ENCODE measurements at regions of chr11 and their contacts with region 1.

Region 1: GRCh38 chr11:12235947-12236743 is 125.8 kb downstream of the MICAL2 start:
- DNase-seq: peak; percentile 65 to 74 (median 67)
- H3K4me3 ChIP-seq: peak overlapping the region in 1 of 2 donors; percentile 0
- H3K4me3 Mint-ChIP-seq: peak overlapping the region; percentile 6 to 86 (median 76)
- H3K27ac ChIP-seq: peak overlapping the region; percentile 46
- H3K27ac Mint-ChIP-seq: peak overlapping the region; percentile 76 to 96 (median 93)
- H3K4me1 ChIP-seq: peaks cover 24% of the 10 kb centered on the region
- H3K4me1 Mint-ChIP-seq: peaks cover 15 to 26% (median 20%) of the 10 kb centered on the region in 4 donors
- H3K27me3 ChIP-seq: no peaks in the 10 kb centered on the region
- H3K27me3 Mint-ChIP-seq: no peaks in the 10 kb centered on the region

Region 2: GRCh38 chr11:11987503-11988022 is 248.6 kb before region 1 on chr11:
- CTCF ChIA-PET with region 1: no interaction called
- POLR2A ChIA-PET with region 1: no interaction called
- intact Hi-C with region 1: no loop called
- DNase-seq: no peak
- H3K4me3 ChIP-seq: no peak overlapping the region
- H3K4me3 Mint-ChIP-seq: no peak overlapping the region
- H3K27ac ChIP-seq: no peak overlapping the region
- H3K27ac Mint-ChIP-seq: peak overlapping the region in 2 of 7 donors; percentile 37 to 59
- H3K4me1 ChIP-seq: no peaks in the 10 kb centered on the region
- H3K4me1 Mint-ChIP-seq: peaks cover 0 to 6% (median 4%) of the 10 kb centered on the region in 4 donors
- H3K27me3 ChIP-seq: no peaks in the 10 kb centered on the region
- H3K27me3 Mint-ChIP-seq: peaks cover 2 to 4% of the 10 kb centered on the region in 2 donors

Region 3: GRCh38 chr11:12087075-12088004 is 148.8 kb before region 1 on chr11:
- CTCF ChIA-PET with region 1: interaction called, 60 read pairs
- POLR2A ChIA-PET with region 1: interaction called, 9 read pairs
- intact Hi-C with region 1: loop called (anchors 1 kb)
- DNase-seq: peak; percentile 39 to 63 (median 52)
- H3K4me3 ChIP-seq: peak overlapping the region; percentile 6 to 26
- H3K4me3 Mint-ChIP-seq: peak overlapping the region; percentile 53 to 81 (median 72)
- H3K27ac ChIP-seq: no peak overlapping the region
- H3K27ac Mint-ChIP-seq: peak overlapping the region; percentile 67 to 94 (median 90)
- H3K4me1 ChIP-seq: peaks cover 62% of the 10 kb centered on the region
- H3K4me1 Mint-ChIP-seq: peaks cover 59 to 83% (median 65%) of the 10 kb centered on the region in 4 donors
- H3K27me3 ChIP-seq: no peaks in the 10 kb centered on the region
- H3K27me3 Mint-ChIP-seq: no peaks in the 10 kb centered on the region

Region 4: GRCh38 chr11:12122083-12122482 is 114.1 kb before region 1 on chr11:
- CTCF ChIA-PET with region 1: interaction called, 14 read pairs
- POLR2A ChIA-PET with region 1: interaction called, 3 read pairs
- intact Hi-C with region 1: no loop called
- DNase-seq: no peak
- H3K4me3 ChIP-seq: no peak overlapping the region
- H3K4me3 Mint-ChIP-seq: no peak overlapping the region
- H3K27ac ChIP-seq: no peak overlapping the region
- H3K27ac Mint-ChIP-seq: no peak overlapping the region
- H3K4me1 ChIP-seq: peaks cover 36% of the 10 kb centered on the region
- H3K4me1 Mint-ChIP-seq: peaks cover 12 to 30% (median 26%) of the 10 kb centered on the region in 4 donors
- H3K27me3 ChIP-seq: no peaks in the 10 kb centered on the region
- H3K27me3 Mint-ChIP-seq: no peaks in the 10 kb centered on the region

Region 5: DNA sequence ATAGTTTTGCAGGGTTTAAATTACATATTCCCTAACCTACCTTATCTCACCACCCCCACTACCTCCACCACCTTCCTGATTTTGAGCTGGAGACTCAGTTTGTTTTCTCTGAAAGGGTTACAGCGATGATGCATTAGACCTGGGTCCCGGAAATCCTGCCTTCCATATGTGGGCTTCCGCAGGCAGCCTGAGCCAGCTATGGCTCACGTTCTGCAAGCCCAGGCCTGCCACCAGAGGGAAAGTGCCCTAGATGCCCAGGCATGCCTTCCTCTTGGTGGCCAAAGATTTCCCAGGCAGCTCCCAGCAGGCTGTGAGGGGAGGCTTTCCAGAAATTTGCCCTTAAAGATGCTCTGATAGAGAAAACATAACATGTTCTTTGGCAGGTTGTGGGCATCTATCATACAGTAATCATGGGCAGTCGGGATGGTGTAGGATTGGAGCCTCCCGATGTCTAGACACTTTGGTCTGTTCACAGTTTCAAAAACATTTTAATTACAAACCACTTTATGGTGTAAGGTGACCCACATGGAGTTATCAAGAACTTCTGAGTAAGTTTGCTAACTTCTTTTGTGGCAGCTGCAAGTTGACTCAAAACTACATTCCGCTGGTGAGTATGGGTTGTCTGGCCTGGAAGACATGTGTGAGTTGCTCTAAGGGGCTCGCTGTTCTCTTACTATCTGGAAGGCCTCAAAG is 46.5 kb before region 1 on chr11:
- CTCF ChIA-PET with region 1: interaction called, 40 read pairs
- POLR2A ChIA-PET with region 1: interaction called, 11 read pairs
- intact Hi-C with region 1: no loop called
- DNase-seq: peak; percentile 60 to 73 (median 66)
- H3K4me3 ChIP-seq: peak overlapping the region in 1 of 2 donors; percentile 15
- H3K4me3 Mint-ChIP-seq: peak overlapping the region; percentile 56 to 84 (median 74)
- H3K27ac ChIP-seq: peak overlapping the region; percentile 45
- H3K27ac Mint-ChIP-seq: peak overlapping the region; percentile 8 to 95 (median 87)
- H3K4me1 ChIP-seq: peaks cover 40% of the 10 kb centered on the region
- H3K4me1 Mint-ChIP-seq: peaks cover 21 to 60% (median 37%) of the 10 kb centered on the region in 4 donors
- H3K27me3 ChIP-seq: no peaks in the 10 kb centered on the region
- H3K27me3 Mint-ChIP-seq: no peaks in the 10 kb centered on the region

Region 6: GRCh38 chr11:12281571-12282478 is 45.7 kb after region 1 on chr11:
- CTCF ChIA-PET with region 1: interaction called, 44 read pairs
- POLR2A ChIA-PET with region 1: interaction called, 3 read pairs
- intact Hi-C with region 1: loop called (anchors 1 kb)
- DNase-seq: peak; percentile 63 to 75 (median 71)
- H3K4me3 ChIP-seq: no peak overlapping the region
- H3K4me3 Mint-ChIP-seq: no peak overlapping the region
- H3K27ac ChIP-seq: no peak overlapping the region
- H3K27ac Mint-ChIP-seq: no peak overlapping the region
- H3K4me1 ChIP-seq: no peaks in the 10 kb centered on the region
- H3K4me1 Mint-ChIP-seq: no peaks in the 10 kb centered on the region
- H3K27me3 ChIP-seq: no peaks in the 10 kb centered on the region
- H3K27me3 Mint-ChIP-seq: no peaks in the 10 kb centered on the region

Measured in CD4-positive, alpha-beta memory T cell (primary cell).